ENCODE measurements at regions of chr15 and their contacts with region 1.

Region 1: GRCh38 chr15:66774001-66774814 is 72.2 kb downstream of the SMAD6 start:
- DNase-seq: peak; percentile 58 to 87 (median 76)

Region 2: GRCh38 chr15:66619151-66619903 is 154.9 kb before region 1 on chr15:
- intact Hi-C with region 1: loop called (anchors 10 kb)
- DNase-seq: peak; percentile 33 to 82 (median 62)

Region 3: GRCh38 chr15:66700802-66701421 is 73.3 kb before region 1 on chr15:
- intact Hi-C with region 1: loop called (anchors 10 kb)
- DNase-seq: peak; percentile 62 to 93 (median 83)

Region 4: DNA sequence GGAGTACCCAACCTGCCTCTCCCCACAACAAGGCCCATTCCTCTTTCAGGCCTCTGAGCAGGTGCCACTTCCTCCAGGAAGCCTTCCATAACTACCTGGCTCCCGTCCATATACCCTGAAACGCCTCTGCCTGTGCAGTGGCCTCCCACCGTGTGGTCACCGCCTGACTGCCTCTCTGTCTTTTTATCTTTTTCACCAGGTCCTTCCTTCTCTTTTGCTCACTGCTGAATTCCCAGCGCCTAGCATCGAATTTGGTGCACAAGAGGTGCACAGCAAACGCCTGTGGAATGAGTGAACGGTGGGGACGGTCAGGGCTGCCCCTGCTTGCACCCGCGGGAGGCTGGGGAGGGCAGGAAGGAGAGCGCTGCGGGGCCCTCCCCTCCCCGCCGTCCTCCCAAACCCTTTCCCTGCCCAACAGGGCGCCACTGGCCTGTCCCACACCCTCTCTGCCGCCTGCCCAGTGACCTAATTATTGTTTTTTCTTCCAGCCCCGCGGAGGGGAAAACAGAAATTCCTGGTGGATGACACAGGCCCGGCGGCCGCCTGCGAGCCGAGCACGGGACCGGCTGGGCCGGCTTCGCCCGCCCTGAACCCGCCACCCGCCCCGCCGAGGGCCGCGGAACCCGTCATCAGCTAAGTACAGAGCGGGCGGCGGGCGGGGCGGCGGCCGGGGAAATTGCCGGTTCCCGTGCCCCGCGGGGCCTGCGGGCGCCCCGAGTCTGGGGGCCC is 67.9 kb after region 1 on chr15:
- intact Hi-C with region 1: loop called (anchors 10 kb)
- DNase-seq: peak in 36 of 42 donors; percentile 18 to 76 (median 39)

Measured in head of caudate nucleus (tissue), 42 donors.